Cardiac septum (tissue), 1 donor: ENCODE measurements at regions of chr12 and their contacts with region 1.

Region 1: GRCh38 chr12:68610370-68611093 is at the start of gene RAP1B:
- DNase-seq: peak; percentile 96
- total RNA-seq, gene RAP1B: 48.6 TPM

Region 2: DNA sequence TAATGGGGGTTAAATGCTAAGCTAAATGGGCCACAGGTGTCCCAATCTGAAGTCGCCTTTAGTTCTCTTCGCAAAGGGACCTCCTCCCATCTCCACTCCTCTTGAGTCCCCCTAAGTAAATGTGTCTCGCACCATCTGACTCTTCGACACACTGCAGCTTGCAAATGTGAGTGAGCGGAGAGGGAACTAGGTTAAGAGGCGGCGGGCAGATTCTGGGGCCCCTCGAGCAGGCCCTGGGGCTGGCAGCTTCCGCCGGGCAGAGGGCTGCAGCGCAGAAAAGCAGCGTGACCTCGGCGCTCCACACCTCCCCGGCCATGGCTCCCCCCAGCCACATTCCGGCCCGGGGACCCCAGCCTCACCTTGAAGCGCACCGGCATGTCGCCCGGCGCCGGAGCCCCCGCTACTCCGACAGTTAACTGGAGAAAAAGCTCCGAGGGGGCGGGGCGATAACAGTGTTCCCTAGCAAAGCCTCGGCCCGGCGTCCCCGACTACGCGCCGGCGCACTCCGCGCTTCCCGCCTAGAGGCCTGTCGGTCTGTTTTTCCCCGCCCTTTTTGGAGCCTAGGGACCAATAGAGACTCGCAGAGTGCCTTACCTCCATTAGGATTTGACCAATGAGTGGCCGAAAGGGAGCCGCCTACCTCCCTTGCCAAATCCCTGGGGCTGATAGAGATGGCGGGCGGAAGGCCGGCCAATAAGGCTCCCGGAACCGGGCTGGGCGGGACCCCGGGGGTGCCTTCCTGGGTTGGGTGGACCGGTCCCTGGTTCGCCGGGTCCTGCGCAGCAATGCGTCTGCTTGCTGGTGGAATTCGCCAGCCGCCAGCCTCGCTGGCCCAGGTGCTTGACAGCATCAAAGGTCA is 278.4 kb before region 1 on chr12 and contains the start of gene MDM1:
- intact Hi-C with region 1: loop called (anchors 5 kb)
- DNase-seq: peak; percentile 99
- total RNA-seq, gene MDM1: 5.0 TPM

Region 3: GRCh38 chr12:68364893-68365725 is 245.4 kb before region 1 on chr12:
- intact Hi-C with region 1: loop called (anchors 5 kb)
- DNase-seq: peak; percentile 97

Region 4: DNA sequence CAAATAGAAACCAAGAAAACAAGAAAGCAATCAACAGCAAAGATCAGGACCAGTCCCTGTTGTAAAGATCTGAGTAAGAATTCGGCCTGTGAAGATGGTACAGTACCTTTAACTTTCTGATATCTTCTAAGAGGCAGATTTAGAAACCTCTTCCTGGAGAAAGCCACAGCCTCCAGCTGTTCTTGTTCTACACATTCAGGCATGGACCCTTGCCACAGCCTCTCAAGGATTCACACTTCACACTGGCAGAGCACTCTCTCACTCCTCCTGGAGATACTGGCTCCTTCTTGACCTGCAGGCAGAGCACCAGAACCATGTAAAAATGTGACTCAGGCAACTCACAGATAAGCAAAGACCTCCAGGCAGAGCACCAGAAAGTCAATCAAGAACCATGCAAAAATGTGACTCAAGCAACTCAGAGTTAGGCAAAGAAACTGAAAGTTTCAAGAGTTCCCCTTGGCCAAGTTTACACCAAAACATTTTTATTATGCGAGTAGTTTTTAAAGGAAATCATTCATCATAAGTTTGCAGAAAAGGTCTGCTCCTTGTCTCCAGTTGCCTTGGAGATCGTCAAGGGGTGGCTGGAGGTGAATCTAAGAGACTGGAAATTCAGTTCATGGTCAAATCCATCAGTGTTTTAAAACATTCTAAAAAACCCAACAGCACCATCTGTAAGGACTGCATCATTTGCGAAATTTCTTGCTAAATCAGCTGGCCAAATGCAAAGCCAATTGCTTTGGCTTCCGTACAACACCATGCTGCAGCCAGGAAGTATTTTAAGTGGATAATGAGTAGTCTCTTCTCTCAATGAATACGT is 159.1 kb before region 1 on chr12:
- intact Hi-C with region 1: loop called (anchors 2 kb)
- DNase-seq: no peak

Region 5: GRCh38 chr12:68538726-68539614 is 71.6 kb before region 1 on chr12:
- intact Hi-C with region 1: loop called (anchors 5 kb)
- DNase-seq: peak; percentile 83

Region 6: DNA sequence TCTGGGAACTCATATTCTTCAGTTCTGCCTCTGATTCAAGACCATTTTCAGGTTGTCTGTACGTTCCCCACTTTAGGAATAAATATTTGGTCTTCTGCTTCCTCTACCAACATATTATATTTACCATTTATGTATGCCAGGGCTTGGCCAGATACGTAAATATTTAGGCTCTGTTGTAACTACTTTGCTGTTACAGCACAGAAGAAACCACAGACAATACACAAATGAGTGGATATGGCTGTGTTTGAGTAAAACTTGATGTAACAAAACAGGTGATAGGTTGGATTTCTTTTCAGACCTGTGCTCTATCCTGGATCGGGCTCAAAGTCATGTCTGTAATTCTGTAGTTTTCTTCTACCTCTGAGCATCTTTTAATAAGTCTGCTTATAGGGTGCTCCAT is 37.6 kb after region 1 on chr12:
- intact Hi-C with region 1: no loop called
- DNase-seq: no peak

Region 7: DNA sequence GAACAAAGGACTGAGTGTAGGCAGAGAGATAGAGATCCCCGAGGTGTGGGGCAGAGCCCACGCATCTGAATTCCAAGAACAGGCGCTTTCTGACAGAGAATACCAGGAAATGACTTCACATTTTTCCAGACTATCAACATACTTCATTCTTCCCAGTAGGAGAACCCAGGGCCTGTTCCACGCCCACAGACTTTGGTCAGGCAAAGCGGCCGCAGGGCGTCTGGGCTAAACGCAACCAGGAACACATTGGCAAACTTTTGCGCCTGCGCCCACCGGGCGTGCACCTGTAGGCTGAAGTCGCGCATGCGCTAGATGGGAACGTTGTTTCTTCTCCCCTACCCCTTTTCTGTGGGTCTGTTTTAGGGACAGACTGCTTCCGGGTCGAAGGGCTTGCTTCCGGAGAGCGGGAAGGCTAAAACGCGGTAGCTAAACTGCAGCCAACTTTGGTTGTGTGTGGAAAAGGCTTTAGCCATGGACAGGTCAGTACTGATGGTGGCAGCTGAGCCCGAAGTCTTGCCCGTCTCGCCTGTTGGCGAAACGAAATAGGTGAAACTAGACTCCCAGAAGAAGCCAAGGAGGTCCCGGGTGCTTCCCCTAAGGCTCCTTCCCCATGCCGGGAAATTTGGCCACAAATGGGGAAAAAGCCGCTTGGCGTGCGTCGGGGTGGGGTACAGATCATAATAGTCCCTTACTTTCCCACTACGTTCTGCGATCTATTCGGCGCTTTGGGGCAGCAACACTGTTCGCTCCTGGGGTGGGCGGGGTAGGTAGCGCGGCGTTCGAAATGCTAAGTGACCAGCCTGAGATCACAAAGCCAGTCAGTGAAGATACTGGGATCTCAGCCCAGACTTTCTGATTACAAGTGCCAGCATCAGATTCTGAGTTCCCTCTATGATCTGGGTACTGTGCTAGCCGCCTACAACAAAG is 76.3 kb after region 1 on chr12 and contains the start of gene NUP107:
- intact Hi-C with region 1: loop called (anchors 2 kb)
- DNase-seq: peak; percentile 99
- total RNA-seq, gene NUP107: 23.1 TPM

Region 8: GRCh38 chr12:68807576-68808387 is 197.2 kb after region 1 on chr12 and contains the start of gene MDM2:
- intact Hi-C with region 1: loop called (anchors 5 kb)
- DNase-seq: peak; percentile 95
- total RNA-seq, gene MDM2: 47.9 TPM